ENCODE measurements at regions of chrX and their contacts with region 1.

Region 1: GRCh38 chrX:9464435-9465371 is at the start of gene TBL1X:
- DNase-seq: peak; percentile 23 to 68 (median 43)
- ATAC-seq: peak; percentile 26 to 31
- H3K4me3 Mint-ChIP-seq: peak within 1 kb of the TSS; percentile 72 to 89 (median 82)
- H3K27ac Mint-ChIP-seq: peak within 1 kb of the TSS; percentile 62 to 97 (median 93)
- H3K4me1 Mint-ChIP-seq: peaks cover 15 to 54% (median 49%) of the 10 kb centered on the region in 4 donors
- H3K27me3 Mint-ChIP-seq: peaks cover 0 to 4% (median 0%) of the 10 kb centered on the region in 5 donors
- polyA plus RNA-seq, gene TBL1X: 14.6 to 23.4 (median 18.6) TPM

Region 2: GRCh38 chrX:9341291-9342201 is 123.2 kb before region 1 on chrX:
- POLR2A ChIA-PET with region 1: interaction called, 60 read pairs
- DNase-seq: peak; percentile 31 to 87 (median 59)
- ATAC-seq: peak; percentile 59 to 69
- H3K4me3 Mint-ChIP-seq: peak overlapping the region; percentile 74 to 87 (median 84)
- H3K27ac Mint-ChIP-seq: peak overlapping the region; percentile 90 to 99 (median 97)
- H3K4me1 Mint-ChIP-seq: peaks cover 10 to 43% (median 37%) of the 10 kb centered on the region in 4 donors
- H3K27me3 Mint-ChIP-seq: no peaks in the 10 kb centered on the region

Region 3: GRCh38 chrX:9352694-9353411 is 111.8 kb before region 1 on chrX:
- POLR2A ChIA-PET with region 1: interaction called, 16 read pairs
- DNase-seq: peak in 3 of 10 donors; percentile 24 to 37 (median 33)
- ATAC-seq: peak in 1 of 2 donors; percentile 13
- H3K4me3 Mint-ChIP-seq: peak overlapping the region; percentile 53 to 77 (median 73)
- H3K27ac Mint-ChIP-seq: peak overlapping the region; percentile 60 to 94 (median 87)
- H3K4me1 Mint-ChIP-seq: peaks cover 17 to 46% (median 38%) of the 10 kb centered on the region in 4 donors
- H3K27me3 Mint-ChIP-seq: no peaks in the 10 kb centered on the region

Measured in naive thymus-derived CD8-positive, alpha-beta T cell (primary cell).